ENCODE measurements at regions of chr7 and their contacts with region 1.

Region 1: GRCh38 chr7:1664711-1665548 is 5.1 kb upstream of the ELFN1 start:
- DNase-seq: peak; percentile 55 to 81 (median 64)
- ATAC-seq: peak in 3 of 4 donors; percentile 18 to 56 (median 41)
- H3K4me3 ChIP-seq: peak overlapping the region; percentile 49 to 86 (median 69)
- H3K27ac ChIP-seq: peak overlapping the region; percentile 63 to 85 (median 75)
- H3K4me1 ChIP-seq: peaks cover 0 to 61% (median 41%) of the 10 kb centered on the region in 12 donors
- H3K27me3 ChIP-seq: peaks cover 6 to 74% (median 12%) of the 10 kb centered on the region in 9 donors
- CTCF ChIP-seq: peak; percentile 54 to 88 (median 77)
- POLR2A ChIP-seq: no peak

Region 2: GRCh38 chr7:1725199-1725690 is 60.3 kb after region 1 on chr7:
- intact Hi-C with region 1: loop called in 2 of 10 experiments (anchors 2 to 5 kb)
- DNase-seq: peak; percentile 84 to 94 (median 86)
- ATAC-seq: peak; percentile 86 to 96 (median 89)
- H3K4me3 ChIP-seq: peak overlapping the region in 1 of 12 donors; percentile 13
- H3K27ac ChIP-seq: peak overlapping the region in 10 of 12 donors; percentile 53 to 91 (median 76)
- H3K4me1 ChIP-seq: peaks cover 0 to 33% (median 6%) of the 10 kb centered on the region in 12 donors
- H3K27me3 ChIP-seq: no peaks in the 10 kb centered on the region
- CTCF ChIP-seq: no peak
- POLR2A ChIP-seq: no peak

Region 3: DNA sequence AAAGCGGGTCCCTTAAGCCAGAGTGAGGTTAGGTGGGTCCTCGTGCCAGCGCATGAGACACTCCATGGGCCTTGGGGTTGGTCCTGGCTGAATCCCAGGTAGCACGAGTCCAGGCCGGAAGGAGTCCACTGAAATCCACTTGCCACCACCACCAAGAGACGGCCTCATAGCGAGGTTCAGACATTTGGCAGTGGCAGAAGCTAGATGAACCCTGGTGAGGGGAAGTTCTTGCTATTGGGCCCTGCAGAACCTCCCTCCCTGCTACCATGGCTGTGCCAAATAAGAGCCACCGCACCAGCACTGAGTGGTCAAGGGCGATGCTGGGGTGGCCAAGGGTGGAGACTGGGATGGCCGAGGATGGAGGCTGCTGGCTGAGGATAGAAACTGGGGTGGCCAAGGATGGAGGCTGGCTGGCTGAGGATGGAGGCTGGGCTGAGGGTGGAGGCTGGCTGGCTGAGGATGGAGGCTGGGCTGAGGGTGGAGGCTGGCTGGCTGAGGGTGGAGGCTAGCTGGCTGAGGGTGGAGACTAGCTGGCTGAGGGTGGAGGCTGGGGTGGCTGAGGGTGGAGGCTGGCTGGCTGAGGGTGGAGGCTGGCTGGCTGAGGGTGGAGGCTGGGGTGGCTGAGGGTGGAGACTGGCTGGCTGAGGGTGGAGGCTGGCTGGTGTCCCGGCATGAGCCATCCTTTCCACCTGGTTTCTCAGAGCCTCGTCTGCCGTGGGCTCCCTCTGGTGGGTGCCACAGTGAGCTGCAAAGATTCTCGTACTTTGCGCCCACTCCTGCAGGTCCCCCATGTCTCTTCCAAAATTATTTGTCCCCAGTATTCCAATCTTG is 93.3 kb after region 1 on chr7:
- intact Hi-C with region 1: loop called (anchors 1 to 5 kb)
- DNase-seq: peak in 3 of 5 donors; percentile 53 to 75 (median 63)
- ATAC-seq: peak; percentile 44 to 86 (median 68)
- H3K4me3 ChIP-seq: no peak overlapping the region
- H3K27ac ChIP-seq: peak overlapping the region in 4 of 12 donors; percentile 35 to 79 (median 72)
- H3K4me1 ChIP-seq: peaks cover 0 to 12% (median 0%) of the 10 kb centered on the region in 12 donors
- H3K27me3 ChIP-seq: peaks cover 0 to 5% (median 0%) of the 10 kb centered on the region in 9 donors
- CTCF ChIP-seq: peak; percentile 23 to 59 (median 43)
- POLR2A ChIP-seq: no peak

Region 4: DNA sequence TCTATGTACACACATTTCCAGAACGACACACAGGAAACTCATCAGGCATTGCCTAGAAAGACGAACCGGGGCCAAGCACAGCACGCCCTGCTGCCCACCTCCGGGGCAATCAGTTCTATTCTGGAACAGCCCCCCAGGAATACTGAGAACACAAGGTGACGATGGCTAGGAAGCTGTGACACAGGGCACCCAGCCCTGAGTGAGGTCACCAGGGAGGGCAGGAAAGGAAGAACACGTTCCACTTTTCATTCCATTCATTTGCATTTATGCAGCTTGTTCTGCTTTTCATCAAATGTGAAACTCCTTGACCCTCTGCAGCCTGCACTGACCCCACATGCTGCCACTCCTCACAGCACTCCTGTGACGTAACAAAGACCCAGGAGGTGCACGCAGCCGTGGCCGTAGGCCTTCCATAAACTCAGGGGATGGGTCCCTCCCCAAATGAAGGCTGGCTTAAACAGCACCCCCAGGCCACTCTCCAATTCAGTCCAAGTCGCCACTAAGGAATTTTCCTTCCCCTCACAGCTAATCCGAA is 538.9 kb after region 1 on chr7:
- intact Hi-C with region 1: loop called in 8 of 10 experiments (anchors 1 to 10 kb)
- DNase-seq: peak in 1 of 5 donors; percentile 34
- ATAC-seq: peak in 3 of 4 donors; percentile 27 to 36 (median 29)
- H3K4me3 ChIP-seq: no peak overlapping the region
- H3K27ac ChIP-seq: peak overlapping the region in 1 of 12 donors; percentile 5
- H3K4me1 ChIP-seq: peaks cover 0 to 11% (median 6%) of the 10 kb centered on the region in 12 donors
- H3K27me3 ChIP-seq: no peaks in the 10 kb centered on the region
- CTCF ChIP-seq: no peak
- POLR2A ChIP-seq: no peak

Region 5: GRCh38 chr7:2214636-2215035 is 549.7 kb after region 1 on chr7:
- intact Hi-C with region 1: loop called in 8 of 10 experiments (anchors 1 to 10 kb)
- DNase-seq: peak in 2 of 5 donors; percentile 27 to 47
- ATAC-seq: peak in 2 of 4 donors; percentile 6 to 30
- H3K4me3 ChIP-seq: no peak overlapping the region
- H3K27ac ChIP-seq: peak overlapping the region in 10 of 12 donors; percentile 48 to 86 (median 64)
- H3K4me1 ChIP-seq: peaks cover 0 to 24% (median 7%) of the 10 kb centered on the region in 12 donors
- H3K27me3 ChIP-seq: no peaks in the 10 kb centered on the region
- CTCF ChIP-seq: no peak
- POLR2A ChIP-seq: no peak